Endothelial cell of umbilical vein (primary cell): ENCODE measurements at regions of chr5 and their contacts with region 1.

Region 1: GRCh38 chr5:150560401-150561193 is 52.7 kb downstream of the NDST1 start:
- DNase-seq: peak; percentile 79
- H3K4me3 ChIP-seq: no peak overlapping the region
- H3K27ac ChIP-seq: no peak overlapping the region
- H3K4me1 ChIP-seq: no peaks in the 10 kb centered on the region
- H3K27me3 ChIP-seq: no peaks in the 10 kb centered on the region
- CTCF ChIP-seq: peak; percentile 70 to 79
- POLR2A ChIP-seq: peak; percentile 26

Region 2: GRCh38 chr5:150458819-150459557 is 101.6 kb before region 1 on chr5:
- CTCF ChIA-PET with region 1: interaction called, 24 read pairs
- POLR2A ChIA-PET with region 1: no interaction called
- dilution Hi-C with region 1: no loop called
- intact Hi-C with region 1: loop called (anchors 2 kb)
- DNase-seq: peak; percentile 33
- H3K4me3 ChIP-seq: peak overlapping the region in 1 of 3 experiments; percentile 17
- H3K27ac ChIP-seq: no peak overlapping the region
- H3K4me1 ChIP-seq: peaks cover 4% of the 10 kb centered on the region
- H3K27me3 ChIP-seq: no peaks in the 10 kb centered on the region
- CTCF ChIP-seq: peak; percentile 57 to 88
- POLR2A ChIP-seq: no peak

Region 3: DNA sequence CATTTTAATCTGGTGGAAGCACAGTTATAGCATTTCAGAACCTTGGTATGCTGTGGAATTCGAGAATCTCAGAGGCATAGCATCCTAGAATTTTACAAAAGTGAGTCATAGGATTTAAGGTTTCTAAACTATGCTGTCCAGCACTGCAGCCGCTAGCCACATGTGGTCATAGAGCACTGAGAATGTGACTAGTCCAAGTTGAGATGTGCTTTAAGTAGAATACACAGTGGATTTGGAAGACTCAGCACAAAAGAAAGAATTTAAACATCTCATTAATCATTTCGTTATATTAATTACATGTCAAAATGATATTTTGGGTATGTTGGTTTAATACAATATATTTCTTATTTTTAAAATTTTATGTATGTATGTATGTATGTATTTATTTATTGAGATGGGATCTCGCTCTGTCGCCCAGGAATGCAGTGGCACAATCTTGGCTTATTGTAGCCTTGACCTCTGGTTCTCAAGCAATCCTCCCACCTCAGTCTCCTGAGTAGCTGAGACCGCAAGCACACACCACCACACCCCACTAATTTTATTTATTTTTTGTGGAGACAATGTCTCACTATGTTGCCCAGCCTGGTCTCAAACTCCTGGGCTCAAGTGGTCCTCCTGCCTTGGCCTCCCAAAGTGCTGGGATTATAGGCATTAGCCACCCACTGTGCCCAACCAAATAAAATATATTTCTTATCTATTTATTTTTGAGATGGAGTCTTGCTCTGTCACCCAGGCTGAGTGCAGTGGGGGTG is 90.7 kb before region 1 on chr5:
- CTCF ChIA-PET with region 1: no interaction called
- POLR2A ChIA-PET with region 1: no interaction called
- dilution Hi-C with region 1: no loop called
- intact Hi-C with region 1: no loop called
- DNase-seq: peak; percentile 47
- H3K4me3 ChIP-seq: no peak overlapping the region
- H3K27ac ChIP-seq: no peak overlapping the region
- H3K4me1 ChIP-seq: peaks cover 23% of the 10 kb centered on the region
- H3K27me3 ChIP-seq: no peaks in the 10 kb centered on the region
- CTCF ChIP-seq: no peak
- POLR2A ChIP-seq: no peak

Region 4: GRCh38 chr5:150589871-150590601 is 29.4 kb after region 1 on chr5:
- CTCF ChIA-PET with region 1: interaction called, 5 read pairs
- POLR2A ChIA-PET with region 1: no interaction called
- dilution Hi-C with region 1: no loop called
- intact Hi-C with region 1: loop called (anchors 2 kb)
- DNase-seq: peak; percentile 90
- H3K4me3 ChIP-seq: no peak overlapping the region
- H3K27ac ChIP-seq: no peak overlapping the region
- H3K4me1 ChIP-seq: peaks cover 14% of the 10 kb centered on the region
- H3K27me3 ChIP-seq: no peaks in the 10 kb centered on the region
- CTCF ChIP-seq: peak; percentile 52 to 87
- POLR2A ChIP-seq: no peak

Region 5: DNA sequence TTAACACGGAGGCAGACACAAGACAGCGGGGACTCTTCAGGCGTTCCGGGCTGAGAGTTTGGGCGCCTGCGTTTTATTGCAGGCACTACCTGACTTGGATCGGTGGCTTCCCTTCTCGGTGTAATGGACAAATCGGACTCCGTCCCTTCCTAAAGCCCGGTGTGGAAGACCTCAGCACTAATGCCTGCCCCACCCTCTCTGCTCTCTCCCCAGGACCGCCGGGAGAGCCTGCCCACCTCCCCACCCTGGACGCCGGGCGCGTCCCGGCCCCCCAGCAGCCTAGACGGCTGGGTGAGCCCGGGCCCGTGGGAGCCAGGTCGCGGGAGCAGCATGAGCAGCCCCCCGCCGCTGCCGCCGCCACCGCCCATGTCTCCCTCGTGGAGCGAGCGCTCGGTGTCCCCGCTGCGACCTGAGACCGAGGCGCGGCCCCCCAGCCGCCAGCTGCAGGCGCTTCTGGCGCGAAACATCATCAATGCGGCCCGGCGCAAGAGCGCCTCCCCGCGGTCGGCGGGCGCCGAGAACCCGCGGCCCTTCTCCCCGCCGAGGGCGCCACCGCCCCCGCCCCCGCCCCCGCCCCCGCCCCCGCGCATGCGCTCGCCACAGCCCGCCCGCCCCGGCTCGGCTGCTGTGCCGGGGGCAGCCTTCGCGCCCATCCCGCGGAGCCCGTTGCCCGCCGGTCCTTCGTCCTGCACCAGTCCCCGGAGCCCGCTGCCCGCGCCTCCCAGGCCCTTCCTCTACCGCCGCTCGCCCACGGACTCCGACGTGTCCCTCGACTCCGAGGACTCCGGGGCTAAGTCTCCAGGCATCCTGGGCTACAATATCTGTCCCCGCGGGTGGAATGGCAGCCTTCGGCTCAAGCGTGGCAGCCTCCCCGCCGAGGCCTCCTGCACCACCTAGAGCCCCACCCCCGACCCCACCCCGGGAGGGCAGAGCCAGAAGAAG is 95.9 kb after region 1 on chr5:
- CTCF ChIA-PET with region 1: interaction called, 123 read pairs
- POLR2A ChIA-PET with region 1: no interaction called
- dilution Hi-C with region 1: no loop called
- intact Hi-C with region 1: loop called (anchors 1 kb)
- DNase-seq: peak; percentile 46
- H3K4me3 ChIP-seq: no peak overlapping the region
- H3K27ac ChIP-seq: no peak overlapping the region
- H3K4me1 ChIP-seq: no peaks in the 10 kb centered on the region
- H3K27me3 ChIP-seq: peaks cover under 1 to 7% of the 10 kb centered on the region in 2 experiments
- CTCF ChIP-seq: peak; percentile 34 to 70
- POLR2A ChIP-seq: peak; percentile 58

Region 6: DNA sequence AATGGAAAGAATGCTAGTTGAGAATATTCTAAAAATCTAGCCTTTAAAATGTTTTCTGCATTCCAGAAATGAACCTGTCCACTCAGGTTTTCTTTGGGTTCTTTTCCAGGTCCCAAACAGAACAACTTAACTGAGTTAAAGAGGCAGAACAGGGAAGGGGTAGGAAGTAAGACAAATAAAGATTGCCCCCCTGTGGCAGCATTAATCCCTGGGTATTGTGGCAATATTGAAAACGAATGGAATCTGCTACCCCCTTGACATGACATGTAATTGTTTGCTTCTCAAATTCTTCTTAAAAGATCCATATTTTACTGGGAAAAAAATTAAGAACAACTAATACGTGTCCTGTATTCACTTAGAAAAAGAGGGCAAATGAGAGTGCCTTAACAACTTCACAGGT is 149.6 kb after region 1 on chr5:
- CTCF ChIA-PET with region 1: interaction called, 10 read pairs
- POLR2A ChIA-PET with region 1: no interaction called
- dilution Hi-C with region 1: no loop called
- intact Hi-C with region 1: loop called (anchors 1 kb)
- DNase-seq: peak; percentile 36
- H3K4me3 ChIP-seq: no peak overlapping the region
- H3K27ac ChIP-seq: no peak overlapping the region
- H3K4me1 ChIP-seq: peaks cover 10% of the 10 kb centered on the region
- H3K27me3 ChIP-seq: no peaks in the 10 kb centered on the region
- CTCF ChIP-seq: peak; percentile 10 to 29
- POLR2A ChIP-seq: no peak

Region 7: DNA sequence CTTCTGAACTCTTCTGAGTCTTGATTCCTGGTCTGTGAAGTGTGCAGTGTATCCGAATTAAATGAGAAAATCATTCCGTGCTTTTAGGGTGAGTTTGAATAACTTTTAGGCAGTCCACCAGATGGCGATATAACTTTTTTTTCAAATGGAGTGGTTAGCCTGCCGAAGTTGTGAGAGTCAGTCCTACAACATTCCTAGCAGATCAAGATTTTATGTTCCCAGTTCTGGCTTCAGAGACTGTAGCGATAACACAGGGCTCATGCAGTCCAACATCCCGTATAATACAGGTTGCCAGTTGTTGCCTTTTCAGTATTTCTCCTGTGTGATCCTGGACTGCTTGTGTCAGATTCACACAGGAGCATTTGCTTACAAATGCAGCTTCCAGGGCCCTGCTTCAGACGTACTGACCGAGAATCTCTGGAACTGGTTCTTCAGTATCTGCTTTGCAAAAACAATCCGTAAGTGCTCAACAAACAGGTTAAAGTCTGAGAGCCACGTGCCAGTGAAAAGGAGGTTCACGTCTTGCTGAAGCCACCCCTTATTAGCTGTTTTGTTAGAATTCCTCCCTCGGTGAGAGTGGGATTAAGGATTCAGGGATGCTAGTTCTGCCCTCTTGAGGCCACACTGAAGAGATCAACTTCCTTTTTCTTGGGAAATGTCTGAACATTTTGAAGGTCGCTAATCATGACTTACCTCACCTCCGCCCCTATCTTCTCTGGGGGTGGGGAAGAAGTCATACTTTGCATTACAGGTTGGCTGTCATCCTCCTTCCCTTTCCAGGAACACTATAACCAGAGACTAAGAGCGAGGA is 240.7 kb after region 1 on chr5:
- CTCF ChIA-PET with region 1: interaction called, 11 read pairs
- POLR2A ChIA-PET with region 1: no interaction called
- dilution Hi-C with region 1: no loop called
- intact Hi-C with region 1: no loop called
- DNase-seq: peak; percentile 80
- H3K4me3 ChIP-seq: peak overlapping the region in 2 of 3 experiments; percentile 14 to 24
- H3K27ac ChIP-seq: no peak overlapping the region
- H3K4me1 ChIP-seq: no peaks in the 10 kb centered on the region
- H3K27me3 ChIP-seq: peaks cover 15 to 44% of the 10 kb centered on the region in 2 experiments
- CTCF ChIP-seq: peak; percentile 31 to 53
- POLR2A ChIP-seq: no peak